PC-9 (cell line): ENCODE measurements at regions of chr10 and their contacts with region 1.

Region 1: GRCh38 chr10:110815354-110816004 is 56.2 kb upstream of the PDCD4 start:
- DNase-seq: no peak
- H3K4me3 ChIP-seq: no peak overlapping the region
- H3K27ac ChIP-seq: no peak overlapping the region
- H3K4me1 ChIP-seq: peaks cover 12% of the 10 kb centered on the region
- H3K27me3 ChIP-seq: no peaks in the 10 kb centered on the region; the same call in 1 of the 2 replicates
- CTCF ChIP-seq: no peak

Region 2: DNA sequence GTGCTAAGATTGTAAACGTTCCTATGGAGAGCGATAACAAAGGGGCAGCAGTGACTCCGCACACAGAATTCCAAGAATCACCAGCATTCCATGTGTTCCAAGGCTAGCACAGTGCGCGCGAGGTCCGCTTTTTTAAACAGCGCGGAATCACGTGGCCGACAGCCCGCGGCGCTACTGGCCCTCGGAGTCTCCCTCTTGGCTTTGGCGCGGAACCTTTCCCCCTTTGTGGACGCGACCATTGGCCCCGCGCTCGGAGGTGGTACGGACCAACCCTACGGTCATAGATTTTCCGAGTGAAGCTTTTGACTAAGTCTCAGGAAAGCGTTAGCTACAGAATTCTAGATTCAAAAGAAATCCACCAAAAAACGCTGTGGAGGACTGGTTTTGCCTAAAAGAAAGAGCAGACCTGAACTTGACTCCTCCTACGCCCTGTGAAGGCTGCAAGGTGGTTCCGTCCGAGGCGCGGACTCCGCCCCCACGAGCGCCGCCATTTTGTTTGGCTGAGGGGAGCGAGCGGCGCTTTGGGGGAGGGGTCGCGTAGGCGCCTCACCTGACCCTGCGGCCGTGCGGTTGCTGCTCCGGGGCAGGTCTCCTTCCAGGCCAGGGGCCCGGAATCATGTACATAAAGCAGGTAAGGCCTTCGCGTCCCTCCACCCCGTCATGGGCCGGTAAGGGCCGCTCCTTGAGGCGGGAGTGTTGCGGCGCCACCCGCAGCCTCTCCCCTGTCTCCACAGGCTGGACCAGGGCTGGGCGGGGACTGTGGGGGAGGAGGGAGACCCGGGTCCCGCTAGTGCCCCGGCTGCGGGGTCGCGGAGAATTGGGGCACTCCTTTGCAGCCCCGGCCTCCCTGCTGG is 248.1 kb before region 1 on chr10 and contains the start of gene SMC3:
- CTCF ChIA-PET with region 1: no interaction called
- POLR2A ChIA-PET with region 1: no interaction called
- intact Hi-C with region 1: no loop called
- DNase-seq: peak; percentile 74 to 82
- H3K4me3 ChIP-seq: peak within 1 kb of the TSS; percentile 90
- H3K27ac ChIP-seq: peak within 1 kb of the TSS; percentile 86
- H3K4me1 ChIP-seq: peaks cover 7% of the 10 kb centered on the region
- H3K27me3 ChIP-seq: no peaks in the 10 kb centered on the region
- CTCF ChIP-seq: no peak
- total RNA-seq, gene SMC3: 22.1 and 31.2 TPM in 2 replicates

Region 3: DNA sequence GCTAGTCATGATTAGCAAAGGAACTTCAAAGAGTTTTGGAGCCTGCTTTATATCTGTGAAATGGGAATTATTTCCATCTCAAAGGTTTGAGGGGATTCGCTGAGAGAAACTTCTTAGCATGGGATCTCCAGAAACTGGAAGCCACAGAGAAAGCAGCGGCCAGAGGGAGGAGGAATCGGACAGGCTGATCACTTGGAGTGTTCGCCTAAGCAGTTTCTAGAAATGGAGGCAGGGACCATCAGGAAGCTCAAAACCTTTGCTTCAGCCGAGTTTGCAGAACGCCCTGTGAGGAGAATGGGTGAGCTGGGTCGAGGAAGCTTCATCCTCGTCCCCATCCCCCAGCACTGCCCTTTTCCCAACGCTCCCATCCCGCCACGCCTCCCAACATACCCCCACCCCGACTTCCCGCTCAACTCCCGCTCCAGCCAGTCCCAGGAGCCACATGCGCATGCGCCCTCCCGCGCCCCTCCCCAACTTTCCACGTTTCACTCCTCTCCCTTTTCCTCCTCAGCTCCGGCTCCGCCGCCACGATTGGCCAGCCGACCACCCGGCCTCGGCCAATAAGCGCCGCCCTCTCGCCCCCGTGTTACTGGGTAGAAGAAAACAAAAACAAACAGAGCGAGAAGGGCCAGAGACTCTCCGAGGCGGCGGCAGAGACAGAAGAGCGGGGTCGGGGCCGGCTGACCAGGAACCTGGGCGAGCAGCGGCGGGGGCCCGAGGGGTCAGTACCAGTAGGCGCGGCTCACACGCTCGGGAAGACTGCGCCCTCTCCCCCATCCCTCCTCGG is 56.0 kb after region 1 on chr10 and contains the start of gene PDCD4:
- CTCF ChIA-PET with region 1: no interaction called
- POLR2A ChIA-PET with region 1: no interaction called
- intact Hi-C with region 1: loop called (anchors 5 kb)
- DNase-seq: peak; percentile 82 to 95
- H3K4me3 ChIP-seq: peak within 1 kb of the TSS; percentile 80
- H3K27ac ChIP-seq: peak within 1 kb of the TSS; percentile 19; the same call in 1 of the 2 replicates
- H3K4me1 ChIP-seq: peaks cover 14% of the 10 kb centered on the region
- H3K27me3 ChIP-seq: no peaks in the 10 kb centered on the region
- CTCF ChIP-seq: no peak
- total RNA-seq, gene PDCD4: 92.4 and 96.4 TPM in 2 replicates